Heart left ventricle (tissue), 16 donors: ENCODE measurements at regions of chr12 and their contacts with region 1.

Region 1: GRCh38 chr12:102484428-102484958 is 4.1 kb upstream of the IGF1 start:
- DNase-seq: peak in 4 of 5 donors; percentile 35 to 56 (median 44)
- ATAC-seq: peak in 3 of 4 donors; percentile 32 to 70 (median 44)
- H3K4me3 ChIP-seq: peak overlapping the region in 6 of 12 donors; percentile 6 to 41 (median 31)
- H3K27ac ChIP-seq: peak overlapping the region in 8 of 12 donors; percentile 1 to 78 (median 50)
- H3K4me1 ChIP-seq: peaks cover 0 to 21% (median 3%) of the 10 kb centered on the region in 12 donors
- H3K27me3 ChIP-seq: no peaks in the 10 kb centered on the region
- CTCF ChIP-seq: peak; percentile 85 to 96 (median 90)
- POLR2A ChIP-seq: no peak

Region 2: GRCh38 chr12:101925935-101926334 is 558.6 kb before region 1 on chr12:
- intact Hi-C with region 1: no loop called
- DNase-seq: no peak
- ATAC-seq: no peak
- H3K4me3 ChIP-seq: no peak overlapping the region
- H3K27ac ChIP-seq: peak overlapping the region in 11 of 12 donors; percentile 13 to 86 (median 64)
- H3K4me1 ChIP-seq: peaks cover 0 to 33% (median 0%) of the 10 kb centered on the region in 12 donors
- H3K27me3 ChIP-seq: no peaks in the 10 kb centered on the region
- CTCF ChIP-seq: no peak
- POLR2A ChIP-seq: no peak

Region 3: GRCh38 chr12:102169922-102170621 is 314.4 kb before region 1 on chr12:
- intact Hi-C with region 1: loop called in 8 of 10 experiments (anchors 2 to 5 kb)
- DNase-seq: no peak
- ATAC-seq: no peak
- H3K4me3 ChIP-seq: no peak overlapping the region
- H3K27ac ChIP-seq: no peak overlapping the region
- H3K4me1 ChIP-seq: peaks cover 0 to 11% (median 0%) of the 10 kb centered on the region in 12 donors
- H3K27me3 ChIP-seq: no peaks in the 10 kb centered on the region
- CTCF ChIP-seq: peak; percentile 43 to 70 (median 58)
- POLR2A ChIP-seq: no peak

Region 4: DNA sequence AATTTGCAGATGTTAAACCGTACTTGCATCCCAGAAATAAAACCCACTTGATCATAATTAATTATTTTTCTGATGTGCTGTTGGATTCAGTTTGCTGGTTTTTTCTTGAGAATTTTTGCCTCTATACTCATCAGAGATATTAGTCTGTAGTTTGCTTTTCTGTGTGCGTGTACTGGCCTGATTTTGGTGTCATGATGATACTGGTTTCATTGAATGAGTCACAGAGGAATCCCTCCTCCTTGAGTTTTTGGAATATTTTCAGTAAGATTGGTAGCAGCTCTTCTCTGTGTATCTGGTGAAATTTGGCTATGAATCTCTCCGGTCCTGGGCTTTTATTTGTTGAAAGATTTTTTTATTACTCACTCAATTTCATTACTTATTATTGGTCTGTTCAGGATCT is 186.5 kb before region 1 on chr12:
- intact Hi-C with region 1: loop called in 1 of 10 experiments (anchors 10 kb)
- DNase-seq: no peak
- ATAC-seq: no peak
- H3K4me3 ChIP-seq: no peak overlapping the region
- H3K27ac ChIP-seq: no peak overlapping the region
- H3K4me1 ChIP-seq: no peaks in the 10 kb centered on the region
- H3K27me3 ChIP-seq: no peaks in the 10 kb centered on the region
- CTCF ChIP-seq: no peak
- POLR2A ChIP-seq: no peak

Region 5: DNA sequence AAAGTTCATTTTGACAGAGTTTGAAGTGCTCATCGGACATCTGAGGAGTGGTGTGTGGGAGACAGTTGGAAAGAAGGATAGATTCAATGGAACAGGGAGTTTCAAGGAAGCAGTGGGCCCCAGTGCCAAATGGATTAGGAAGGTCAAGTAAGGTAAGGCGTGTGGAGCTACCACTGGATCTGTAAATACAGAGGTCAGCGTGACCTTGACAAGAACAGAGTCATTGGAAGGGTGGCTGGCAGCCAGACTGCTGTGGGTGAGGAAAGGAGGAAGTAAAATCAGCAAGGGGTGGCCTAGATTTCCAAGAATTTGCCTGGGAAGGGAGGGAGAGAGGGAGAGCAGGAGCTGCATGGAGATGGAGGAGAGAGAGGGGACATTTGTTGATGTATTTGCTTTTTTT is 64.0 kb after region 1 on chr12:
- intact Hi-C with region 1: no loop called
- DNase-seq: peak in 3 of 5 donors; percentile 51 to 64 (median 58)
- ATAC-seq: peak in 2 of 4 donors; percentile 26 to 55
- H3K4me3 ChIP-seq: no peak overlapping the region
- H3K27ac ChIP-seq: no peak overlapping the region
- H3K4me1 ChIP-seq: no peaks in the 10 kb centered on the region
- H3K27me3 ChIP-seq: no peaks in the 10 kb centered on the region
- CTCF ChIP-seq: no peak
- POLR2A ChIP-seq: no peak